ENCODE measurements at regions of chr1 and their contacts with region 1.

Region 1: DNA sequence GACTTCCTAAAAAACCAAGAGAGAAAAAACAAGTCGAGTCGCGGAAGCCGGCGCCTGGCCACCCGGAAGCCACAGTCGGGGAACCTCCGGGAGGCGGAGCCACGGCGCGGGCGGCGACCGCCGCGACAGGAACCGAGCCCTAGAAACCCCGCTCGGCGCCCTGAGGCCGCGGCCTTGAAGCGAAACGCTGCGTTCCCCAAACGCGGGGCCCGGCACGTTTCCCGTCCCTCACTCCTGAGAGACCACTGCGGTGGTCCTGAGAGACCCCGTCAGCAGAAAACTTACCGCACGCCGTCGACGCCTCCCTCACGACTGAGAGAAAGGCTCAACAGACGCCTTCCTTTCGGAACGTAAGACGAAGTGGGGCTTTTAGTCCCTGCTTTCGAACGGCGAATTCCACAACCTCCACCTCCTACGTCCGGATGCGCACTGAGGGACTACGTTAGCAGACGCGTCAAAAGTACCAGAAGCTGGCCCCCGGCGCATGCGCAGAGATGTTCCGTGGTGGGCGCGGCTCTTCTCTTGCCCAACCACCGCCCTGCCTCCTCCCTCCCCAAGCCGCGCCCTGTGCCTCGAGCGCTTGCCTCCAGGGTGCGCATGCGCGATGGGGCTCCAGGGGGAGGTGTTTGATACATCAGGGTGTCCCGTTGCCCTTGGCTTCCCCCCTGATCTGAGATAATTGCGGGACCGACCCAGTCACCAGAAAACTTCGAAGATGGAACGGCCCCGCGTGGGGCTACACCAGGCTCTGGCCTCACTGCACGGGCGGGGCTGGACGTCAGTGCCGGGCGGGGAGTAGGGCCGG is at the start of gene RSRP1:
- DNase-seq: peak; percentile 100
- H3K4me3 Mint-ChIP-seq: peak within 1 kb of the TSS; percentile 95
- H3K27ac Mint-ChIP-seq: peak within 1 kb of the TSS; percentile 99
- H3K4me1 Mint-ChIP-seq: peaks cover 41% of the 10 kb centered on the region
- H3K27me3 Mint-ChIP-seq: peaks cover 3% of the 10 kb centered on the region
- total RNA-seq, gene RSRP1: 123 to 143 TPM

Region 2: DNA sequence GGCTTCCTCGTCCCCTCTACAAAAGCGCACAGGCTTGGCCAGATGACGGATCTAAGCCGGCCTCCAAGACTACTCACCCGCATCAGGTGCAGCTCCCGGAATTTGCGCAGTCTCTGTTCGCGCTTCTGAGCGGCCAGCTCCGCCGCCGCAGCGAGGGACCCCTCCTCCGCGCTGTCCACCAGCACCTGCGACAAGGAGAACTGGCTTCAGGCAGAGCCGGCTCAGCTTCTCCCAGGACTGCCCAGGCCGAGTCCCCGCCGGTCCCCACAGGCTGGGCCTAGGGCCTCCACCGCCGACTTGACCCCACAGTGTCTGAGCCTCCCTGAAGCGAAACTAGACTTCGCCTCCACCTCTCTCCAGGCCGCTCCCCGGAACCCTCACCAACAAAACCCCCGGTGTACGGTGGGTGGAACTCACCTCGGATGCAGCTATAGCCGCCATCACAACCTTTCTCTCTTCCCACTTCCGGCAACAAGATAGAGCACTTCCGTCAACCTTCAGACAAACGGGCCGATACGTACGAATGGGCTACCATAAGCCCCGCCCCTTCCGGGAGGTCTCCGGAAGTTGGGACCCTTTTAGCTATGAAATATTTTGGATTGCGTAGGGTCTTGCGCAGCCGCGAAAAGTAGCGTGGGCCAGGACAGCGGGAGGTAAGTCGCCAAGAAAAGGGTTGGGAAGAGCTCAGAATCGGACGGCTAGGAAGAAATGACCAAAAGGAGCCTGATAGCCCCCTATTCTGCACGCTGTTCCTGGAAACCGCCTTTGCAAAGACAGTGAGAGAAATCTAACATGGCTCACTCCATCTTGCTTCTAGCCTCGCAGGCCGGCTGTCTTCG is 15.0 kb before region 1 on chr1 and contains the start of gene SYF2:
- CTCF ChIA-PET with region 1: interaction called, 7 read pairs
- POLR2A ChIA-PET with region 1: interaction called, 29 read pairs
- intact Hi-C with region 1: loop called (anchors 1 kb)
- DNase-seq: peak; percentile 92
- H3K4me3 Mint-ChIP-seq: no peak within 1 kb of the TSS
- H3K27ac Mint-ChIP-seq: no peak within 1 kb of the TSS
- H3K4me1 Mint-ChIP-seq: peaks cover 35% of the 10 kb centered on the region
- H3K27me3 Mint-ChIP-seq: no peaks in the 10 kb centered on the region
- total RNA-seq, gene SYF2: 45.1 to 45.6 TPM

Region 3: GRCh38 chr1:25338188-25338981 is 91.2 kb after region 1 on chr1 and contains the start of gene TMEM50A:
- CTCF ChIA-PET with region 1: no interaction called
- POLR2A ChIA-PET with region 1: no interaction called
- intact Hi-C with region 1: loop called (anchors 2 kb)
- DNase-seq: peak; percentile 93
- H3K4me3 Mint-ChIP-seq: peak within 1 kb of the TSS; percentile 88
- H3K27ac Mint-ChIP-seq: peak within 1 kb of the TSS; percentile 87
- H3K4me1 Mint-ChIP-seq: peaks cover 29% of the 10 kb centered on the region
- H3K27me3 Mint-ChIP-seq: no peaks in the 10 kb centered on the region
- total RNA-seq, gene TMEM50A: 124 to 128 TPM

Region 4: DNA sequence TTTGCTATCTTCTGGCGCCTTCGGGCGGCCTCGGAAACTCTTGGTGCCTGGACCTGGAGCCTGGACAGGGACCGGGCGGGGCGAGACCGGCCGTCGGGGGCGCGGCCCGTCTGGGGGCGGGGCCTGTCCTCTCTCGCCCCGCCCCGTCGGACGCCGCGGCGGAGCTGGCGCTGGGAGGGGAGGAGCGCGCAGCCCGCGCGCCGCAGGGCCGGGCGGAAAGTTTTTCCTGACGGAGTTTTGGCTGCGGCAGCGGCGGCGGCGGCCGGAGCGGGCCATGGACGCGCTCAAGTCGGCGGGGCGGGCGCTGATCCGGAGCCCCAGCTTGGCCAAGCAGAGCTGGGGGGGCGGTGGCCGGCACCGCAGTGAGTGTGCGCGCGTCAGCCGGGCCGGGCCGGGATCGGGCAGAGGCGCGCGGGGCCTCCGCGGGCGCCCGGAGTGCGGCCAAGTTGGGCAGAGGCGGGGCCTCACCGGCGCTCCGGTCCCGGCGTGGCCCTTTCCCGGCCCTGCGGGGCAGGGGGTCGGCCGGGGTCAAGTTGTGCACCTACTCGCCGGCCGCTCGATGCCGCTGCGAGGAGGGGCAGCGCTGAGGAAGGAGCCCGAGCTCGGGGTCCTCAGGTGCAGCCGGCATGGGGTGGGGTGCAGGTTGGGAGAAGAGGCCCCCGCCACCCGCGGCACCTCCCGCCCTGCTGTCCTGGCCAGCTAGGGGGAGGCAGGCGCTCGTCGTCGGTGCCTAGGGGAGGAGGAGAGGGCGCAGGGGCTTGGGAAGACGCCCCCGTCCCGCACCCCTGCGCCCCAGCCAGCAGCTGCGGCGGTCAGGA is 296.4 kb after region 1 on chr1 and contains the start of gene LDLRAP1:
- CTCF ChIA-PET with region 1: no interaction called
- POLR2A ChIA-PET with region 1: no interaction called
- intact Hi-C with region 1: no loop called
- DNase-seq: peak; percentile 75
- H3K4me3 Mint-ChIP-seq: peak within 1 kb of the TSS; percentile 81
- H3K27ac Mint-ChIP-seq: peak within 1 kb of the TSS; percentile 64
- H3K4me1 Mint-ChIP-seq: peaks cover 35% of the 10 kb centered on the region
- H3K27me3 Mint-ChIP-seq: no peaks in the 10 kb centered on the region
- total RNA-seq, gene LDLRAP1: 11.9 to 14.8 TPM